ENCODE measurements at regions of chr6 and their contacts with region 1.

Region 1: GRCh38 chr6:136262940-136263339 is 12.8 kb upstream of the MTFR2 start:
- DNase-seq: no peak
- H3K4me3 ChIP-seq: no peak overlapping the region
- H3K27ac ChIP-seq: no peak overlapping the region
- H3K4me1 ChIP-seq: no peaks in the 10 kb centered on the region
- H3K27me3 ChIP-seq: no peaks in the 10 kb centered on the region
- CTCF ChIP-seq: no peak
- EP300 ChIP-seq: no peak
- POLR2A ChIP-seq: no peak
- RAD21 ChIP-seq: no peak

Region 2: DNA sequence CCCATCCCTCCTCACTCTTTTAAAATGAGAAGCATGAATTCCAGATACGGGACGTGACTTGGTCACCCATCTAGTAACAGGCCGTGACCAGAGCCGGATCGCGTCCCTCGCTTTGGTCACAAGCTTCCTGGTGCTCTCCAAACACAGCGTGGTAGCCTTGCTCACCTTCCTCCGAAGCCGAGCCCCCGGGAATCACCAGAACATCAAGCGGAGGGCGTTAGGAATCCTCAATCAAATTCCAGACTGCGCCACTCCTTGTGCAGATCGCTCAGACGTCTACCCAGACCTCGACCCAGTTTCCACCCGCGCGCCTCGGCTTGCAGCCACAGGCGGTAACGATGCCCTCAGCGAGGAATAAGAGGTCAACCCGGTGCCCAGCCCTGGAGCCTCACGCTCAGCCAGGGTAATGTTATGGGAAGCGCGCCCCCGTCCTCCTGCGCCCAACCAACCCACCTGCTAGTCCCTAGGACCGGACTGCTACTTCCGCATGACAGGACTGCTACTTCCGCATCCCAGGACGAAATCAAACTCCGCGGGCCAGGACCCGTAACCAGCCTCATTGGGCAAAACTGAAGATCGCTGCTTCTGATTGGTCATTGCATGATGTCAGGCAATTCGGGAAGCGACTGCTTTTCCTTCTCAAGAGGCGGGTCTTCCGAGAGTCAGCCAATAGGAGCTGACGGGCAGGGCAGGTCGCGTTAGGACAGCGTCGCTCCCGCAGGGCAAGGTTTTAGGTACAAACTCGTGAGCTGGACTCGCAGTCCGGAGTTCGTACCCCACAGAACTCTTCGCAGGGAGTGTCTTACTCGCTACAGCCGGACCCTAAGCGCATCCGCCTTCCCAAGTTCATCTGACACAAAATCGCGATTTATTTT is 12.9 kb before region 1 on chr6 and contains the start of gene MTFR2:
- CTCF ChIA-PET with region 1: interaction called, 4 read pairs
- POLR2A ChIA-PET with region 1: interaction called, 11 read pairs
- DNase-seq: peak; percentile 89 to 97
- H3K4me3 ChIP-seq: peak within 1 kb of the TSS; percentile 70 to 97 (median 82)
- H3K27ac ChIP-seq: no peak within 1 kb of the TSS
- H3K4me1 ChIP-seq: peaks cover 0 to 3% (median 0%) of the 10 kb centered on the region in 4 experiments; a peak in 2 of 7 replicates
- H3K27me3 ChIP-seq: no peaks in the 10 kb centered on the region
- CTCF ChIP-seq: peak in 1 of 3 experiments; percentile 1; a peak in 1 of 4 replicates
- EP300 ChIP-seq: peak in 1 of 2 experiments; percentile 16; a peak in 1 of 3 replicates
- POLR2A ChIP-seq: peak; percentile 31 to 60
- RAD21 ChIP-seq: no peak
- total RNA-seq, gene MTFR2: 8.2 and 8.5 TPM in 2 replicates